Activated CD4-positive, alpha-beta memory T cell treated with anti-CD3 and anti-CD28 coated beads, Interleukin-2, amount 10 ng/mL, durations not matched to agents 7 days and 5 days (primary cell): ENCODE measurements at regions of chr2 and their contacts with region 1.

Region 1: DNA sequence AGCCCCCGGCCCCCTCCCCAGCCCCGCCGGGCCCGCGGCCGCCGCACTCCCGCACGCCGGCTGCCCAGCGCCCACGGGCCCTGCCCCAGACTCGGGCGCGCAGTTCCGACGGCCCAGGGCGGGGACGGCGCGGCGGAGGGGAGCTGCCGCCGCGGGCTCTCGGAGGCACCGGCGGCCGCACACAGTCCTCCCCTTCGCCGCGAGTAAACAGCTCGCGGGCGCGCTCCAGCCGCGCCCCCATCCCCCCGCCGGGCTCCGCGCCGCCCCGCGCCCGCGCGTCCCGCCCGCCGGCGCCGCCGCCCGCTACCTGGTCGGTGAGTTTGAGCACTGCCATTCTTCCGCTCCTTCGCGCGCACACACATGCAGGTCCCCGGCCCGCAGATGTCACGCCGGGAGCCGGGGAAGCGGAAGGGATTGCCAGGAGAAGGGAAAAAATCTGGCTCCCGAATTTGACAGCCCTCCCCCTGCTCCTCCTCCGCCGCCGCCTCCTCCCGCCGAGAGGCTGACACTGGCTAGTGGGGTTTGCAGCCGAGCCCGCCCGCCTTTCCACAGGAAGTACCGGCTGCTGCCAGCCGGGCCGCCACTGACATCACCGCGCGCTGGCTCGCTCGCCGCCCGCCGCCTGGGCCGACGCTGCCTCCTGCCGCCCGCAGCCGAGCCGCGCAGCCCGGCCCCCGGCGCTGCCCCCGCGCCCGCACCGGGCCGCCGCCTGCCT is at the start of gene ANKRD44:
- DNase-seq: peak; percentile 89
- H3K4me3 Mint-ChIP-seq: peak within 1 kb of the TSS; percentile 90
- H3K27ac Mint-ChIP-seq: peak within 1 kb of the TSS; percentile 95
- H3K4me1 Mint-ChIP-seq: peaks cover 53% of the 10 kb centered on the region
- H3K27me3 Mint-ChIP-seq: no peaks in the 10 kb centered on the region
- total RNA-seq, gene ANKRD44: 214 to 246 TPM

Region 2: DNA sequence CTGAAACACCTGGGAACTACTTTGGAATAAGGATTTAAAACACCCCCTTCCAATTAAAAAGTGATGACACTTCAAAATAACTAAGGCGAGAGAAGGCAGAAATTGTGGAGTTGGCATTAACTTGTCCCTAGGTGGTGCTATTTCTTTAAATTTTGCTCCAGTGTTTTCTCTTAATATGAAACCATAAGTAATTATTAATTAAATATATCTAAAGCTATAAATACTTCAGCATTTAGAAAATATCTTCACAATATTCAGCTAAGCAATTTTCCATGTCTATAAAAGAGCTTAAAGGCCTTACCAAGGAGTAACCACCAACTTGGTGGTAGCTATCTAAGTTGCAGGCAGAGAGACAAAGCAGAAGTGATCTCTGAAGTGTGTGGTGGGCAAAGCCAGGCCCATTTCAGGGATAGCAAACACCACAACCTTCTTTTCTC is 197.1 kb before region 1 on chr2:
- CTCF ChIA-PET with region 1: interaction called, 22 read pairs
- POLR2A ChIA-PET with region 1: interaction called, 4 read pairs
- DNase-seq: no peak
- H3K4me3 Mint-ChIP-seq: no peak overlapping the region
- H3K27ac Mint-ChIP-seq: no peak overlapping the region
- H3K4me1 Mint-ChIP-seq: peaks cover 14% of the 10 kb centered on the region
- H3K27me3 Mint-ChIP-seq: no peaks in the 10 kb centered on the region

Region 3: DNA sequence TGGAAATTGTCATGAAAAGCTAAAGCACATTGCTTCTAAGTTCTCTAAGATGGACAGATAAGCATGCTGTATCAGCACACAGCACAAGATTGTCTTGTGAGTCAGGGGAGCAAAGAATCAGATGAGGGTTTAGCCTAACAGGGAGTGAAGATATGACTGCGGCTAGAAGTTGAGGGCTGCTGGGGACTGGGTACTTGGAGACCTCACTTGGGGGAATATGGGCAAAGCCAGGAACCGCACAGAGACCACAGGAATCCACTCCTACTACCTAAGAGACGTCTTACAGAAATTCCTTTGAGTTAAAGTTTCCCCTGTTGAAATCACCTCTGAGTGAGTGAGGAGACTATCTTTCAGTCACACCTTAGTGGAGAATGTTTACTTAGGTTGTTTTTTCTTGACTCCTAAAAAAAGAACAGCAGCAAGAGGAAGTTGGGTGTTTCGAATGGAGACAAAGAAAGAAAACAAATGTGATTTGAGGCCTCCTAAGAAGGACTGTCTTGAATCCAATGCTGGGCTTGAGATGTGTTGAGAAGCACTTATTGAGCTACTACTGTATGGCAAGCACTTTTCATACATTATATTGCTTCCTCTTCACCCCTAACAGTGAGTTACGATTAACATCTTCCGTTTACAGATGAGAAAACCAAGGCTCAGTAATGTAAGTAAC is 100.6 kb before region 1 on chr2:
- CTCF ChIA-PET with region 1: interaction called, 6 read pairs
- POLR2A ChIA-PET with region 1: interaction called, 158 read pairs
- DNase-seq: peak; percentile 57
- H3K4me3 Mint-ChIP-seq: peak overlapping the region; percentile 15
- H3K27ac Mint-ChIP-seq: peak overlapping the region; percentile 91
- H3K4me1 Mint-ChIP-seq: peaks cover 96% of the 10 kb centered on the region
- H3K27me3 Mint-ChIP-seq: no peaks in the 10 kb centered on the region

Region 4: GRCh38 chr2:197255543-197255942 is 54.9 kb before region 1 on chr2:
- CTCF ChIA-PET with region 1: interaction called, 10 read pairs
- POLR2A ChIA-PET with region 1: interaction called, 50 read pairs
- DNase-seq: peak; percentile 79
- H3K4me3 Mint-ChIP-seq: peak overlapping the region; percentile 67
- H3K27ac Mint-ChIP-seq: peak overlapping the region; percentile 97
- H3K4me1 Mint-ChIP-seq: peaks cover 72% of the 10 kb centered on the region
- H3K27me3 Mint-ChIP-seq: no peaks in the 10 kb centered on the region

Region 5: DNA sequence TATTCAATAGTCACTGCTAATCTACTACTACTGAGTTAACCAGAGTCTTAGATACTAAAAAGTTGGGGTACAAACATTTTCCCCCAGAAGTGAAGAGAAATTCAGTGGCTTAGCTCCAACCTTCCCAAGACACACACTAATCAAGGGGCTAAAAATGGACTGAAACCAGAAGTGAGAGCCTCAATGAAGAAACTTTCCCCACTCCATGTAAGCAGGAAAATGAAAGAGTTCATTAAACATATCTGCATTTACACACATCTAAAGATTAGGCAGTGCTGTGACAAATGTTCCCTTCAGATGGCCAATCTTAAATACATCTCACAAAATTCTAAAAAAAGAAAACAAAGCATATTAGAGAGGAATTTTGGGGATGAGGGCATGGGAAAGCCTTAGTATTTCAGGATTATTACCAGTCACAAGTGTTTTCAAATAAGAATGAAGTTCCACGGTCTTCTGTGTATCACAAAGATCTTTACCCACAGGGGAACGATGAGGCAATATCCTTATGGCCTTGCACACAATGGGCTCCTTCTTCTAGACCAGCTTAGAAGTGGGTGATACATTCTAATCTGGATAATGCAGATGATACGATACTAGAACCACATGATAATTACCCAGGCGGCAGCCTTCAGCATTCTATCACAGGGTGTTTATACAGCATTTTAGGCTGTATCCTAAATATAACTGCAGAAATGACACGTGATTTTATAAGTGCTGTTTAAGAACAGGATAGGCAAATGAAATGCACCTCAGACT is 17.0 kb before region 1 on chr2:
- CTCF ChIA-PET with region 1: interaction called, 73 read pairs
- POLR2A ChIA-PET with region 1: interaction called, 280 read pairs
- DNase-seq: peak; percentile 32
- H3K4me3 Mint-ChIP-seq: peak overlapping the region; percentile 73
- H3K27ac Mint-ChIP-seq: peak overlapping the region; percentile 96
- H3K4me1 Mint-ChIP-seq: peaks cover 90% of the 10 kb centered on the region
- H3K27me3 Mint-ChIP-seq: no peaks in the 10 kb centered on the region

Region 6: GRCh38 chr2:197499594-197500526 is 189.4 kb after region 1 on chr2 and contains the starts of genes HSPD1 and HSPE1:
- CTCF ChIA-PET with region 1: no interaction called
- POLR2A ChIA-PET with region 1: interaction called, 20 read pairs
- DNase-seq: peak; percentile 98
- H3K4me3 Mint-ChIP-seq: peak within 1 kb of the TSS; percentile 92
- H3K27ac Mint-ChIP-seq: peak within 1 kb of the TSS; percentile 97
- H3K4me1 Mint-ChIP-seq: peaks cover 60% of the 10 kb centered on the region
- H3K27me3 Mint-ChIP-seq: no peaks in the 10 kb centered on the region
- total RNA-seq, gene HSPD1: 227 to 229 TPM
- total RNA-seq, gene HSPE1: 85.9 to 92.6 TPM

Region 7: GRCh38 chr2:198073253-198073652 is 762.8 kb after region 1 on chr2:
- CTCF ChIA-PET with region 1: no interaction called
- POLR2A ChIA-PET with region 1: no interaction called
- DNase-seq: no peak
- H3K4me3 Mint-ChIP-seq: no peak overlapping the region
- H3K27ac Mint-ChIP-seq: no peak overlapping the region
- H3K4me1 Mint-ChIP-seq: peaks cover 2% of the 10 kb centered on the region
- H3K27me3 Mint-ChIP-seq: no peaks in the 10 kb centered on the region